GM10248 (cell line): ENCODE measurements at regions of chr6 and their contacts with region 1.

Region 1: DNA sequence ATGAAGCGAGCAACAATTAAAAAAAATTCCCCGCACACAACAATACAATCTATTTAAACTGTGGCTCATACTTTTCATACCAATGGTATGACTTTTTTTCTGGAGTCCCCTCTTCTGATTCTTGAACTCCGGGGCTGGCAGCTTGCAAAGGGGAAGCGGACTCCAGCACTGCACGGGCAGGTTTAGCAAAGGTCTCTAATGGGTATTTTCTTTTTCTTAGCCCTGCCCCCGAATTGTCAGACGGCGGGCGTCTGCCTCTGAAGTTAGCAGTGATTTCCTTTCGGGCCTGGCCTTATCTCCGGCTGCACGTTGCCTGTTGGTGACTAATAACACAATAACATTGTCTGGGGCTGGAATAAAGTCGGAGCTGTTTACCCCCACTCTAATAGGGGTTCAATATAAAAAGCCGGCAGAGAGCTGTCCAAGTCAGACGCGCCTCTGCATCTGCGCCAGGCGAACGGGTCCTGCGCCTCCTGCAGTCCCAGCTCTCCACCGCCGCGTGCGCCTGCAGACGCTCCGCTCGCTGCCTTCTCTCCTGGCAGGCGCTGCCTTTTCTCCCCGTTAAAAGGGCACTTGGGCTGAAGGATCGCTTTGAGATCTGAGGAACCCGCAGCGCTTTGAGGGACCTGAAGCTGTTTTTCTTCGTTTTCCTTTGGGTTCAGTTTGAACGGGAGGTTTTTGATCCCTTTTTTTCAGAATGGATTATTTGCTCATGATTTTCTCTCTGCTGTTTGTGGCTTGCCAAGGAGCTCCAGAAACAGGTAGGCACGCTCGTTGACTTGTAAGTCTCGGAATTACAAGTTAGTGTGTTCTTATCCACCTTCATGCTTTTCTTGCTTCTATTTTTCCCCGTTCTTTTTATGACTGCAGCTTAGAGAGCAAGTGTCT is at the start of gene EDN1:
- DNase-seq: peak; percentile 74
- CTCF ChIP-seq: peak; percentile 53

Region 2: DNA sequence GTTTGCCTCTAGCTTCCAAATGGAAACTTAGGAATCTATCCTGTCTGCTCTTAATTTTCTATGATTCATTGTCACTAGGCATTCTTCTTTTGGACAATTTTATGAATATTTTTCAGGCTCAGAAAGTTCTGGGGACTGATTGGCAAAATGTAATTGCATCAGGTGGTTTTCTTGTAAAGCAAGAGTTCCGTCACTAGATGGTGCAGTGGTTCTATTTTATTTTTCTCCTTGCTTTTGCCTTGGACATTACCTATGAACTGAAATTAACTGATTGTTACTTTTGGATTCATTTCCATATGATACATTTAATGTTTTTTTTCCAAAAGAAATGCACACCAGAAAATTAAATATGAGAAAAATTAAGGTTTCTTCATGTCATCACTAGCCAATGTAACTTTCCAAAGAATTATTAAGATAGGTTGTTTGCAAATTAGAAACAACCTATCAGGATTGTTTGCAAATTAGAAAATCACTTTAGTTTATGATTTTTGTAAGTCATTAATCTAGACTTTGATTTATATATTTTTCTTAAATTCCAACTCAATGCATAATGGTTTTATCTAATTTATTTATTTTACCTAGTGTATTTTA is 704.7 kb before region 1 on chr6:
- CTCF ChIA-PET with region 1: interaction called, 32 read pairs
- POLR2A ChIA-PET with region 1: no interaction called
- DNase-seq: peak; percentile 52
- CTCF ChIP-seq: peak; percentile 57

Region 3: GRCh38 chr6:11618533-11618932 is 671.6 kb before region 1 on chr6:
- CTCF ChIA-PET with region 1: interaction called, 10 read pairs
- POLR2A ChIA-PET with region 1: no interaction called
- DNase-seq: no peak
- CTCF ChIP-seq: peak; percentile 30

Region 4: DNA sequence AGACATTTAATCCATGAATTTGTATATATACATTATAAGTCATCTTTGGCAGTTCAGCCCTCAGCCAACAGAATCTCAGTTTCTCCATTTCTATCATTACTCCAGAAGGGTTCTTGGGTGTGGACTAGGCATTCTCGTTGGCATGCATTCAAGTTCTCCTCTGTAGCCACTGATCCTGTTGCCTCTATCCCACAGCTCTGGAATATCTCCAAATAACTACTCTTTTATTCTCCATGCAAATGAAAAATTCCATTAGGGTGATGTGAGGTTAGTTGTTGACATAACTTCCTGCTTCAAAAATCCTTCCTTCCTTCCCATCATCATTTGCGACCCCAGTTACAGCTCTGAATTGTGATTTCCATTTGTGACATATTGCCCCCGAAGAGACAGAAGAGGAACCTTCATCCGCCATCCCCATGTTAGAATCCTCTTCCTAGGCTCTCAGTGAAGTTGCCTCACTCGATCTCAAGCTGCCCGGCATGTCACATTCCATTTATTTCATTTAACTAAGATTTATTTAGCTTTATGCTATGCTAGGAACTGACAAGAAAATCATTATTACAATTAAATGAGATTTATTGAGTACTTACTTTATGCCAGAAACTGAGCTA is 93.7 kb before region 1 on chr6:
- CTCF ChIA-PET with region 1: no interaction called
- POLR2A ChIA-PET with region 1: no interaction called
- DNase-seq: no peak
- CTCF ChIP-seq: no peak

Region 5: DNA sequence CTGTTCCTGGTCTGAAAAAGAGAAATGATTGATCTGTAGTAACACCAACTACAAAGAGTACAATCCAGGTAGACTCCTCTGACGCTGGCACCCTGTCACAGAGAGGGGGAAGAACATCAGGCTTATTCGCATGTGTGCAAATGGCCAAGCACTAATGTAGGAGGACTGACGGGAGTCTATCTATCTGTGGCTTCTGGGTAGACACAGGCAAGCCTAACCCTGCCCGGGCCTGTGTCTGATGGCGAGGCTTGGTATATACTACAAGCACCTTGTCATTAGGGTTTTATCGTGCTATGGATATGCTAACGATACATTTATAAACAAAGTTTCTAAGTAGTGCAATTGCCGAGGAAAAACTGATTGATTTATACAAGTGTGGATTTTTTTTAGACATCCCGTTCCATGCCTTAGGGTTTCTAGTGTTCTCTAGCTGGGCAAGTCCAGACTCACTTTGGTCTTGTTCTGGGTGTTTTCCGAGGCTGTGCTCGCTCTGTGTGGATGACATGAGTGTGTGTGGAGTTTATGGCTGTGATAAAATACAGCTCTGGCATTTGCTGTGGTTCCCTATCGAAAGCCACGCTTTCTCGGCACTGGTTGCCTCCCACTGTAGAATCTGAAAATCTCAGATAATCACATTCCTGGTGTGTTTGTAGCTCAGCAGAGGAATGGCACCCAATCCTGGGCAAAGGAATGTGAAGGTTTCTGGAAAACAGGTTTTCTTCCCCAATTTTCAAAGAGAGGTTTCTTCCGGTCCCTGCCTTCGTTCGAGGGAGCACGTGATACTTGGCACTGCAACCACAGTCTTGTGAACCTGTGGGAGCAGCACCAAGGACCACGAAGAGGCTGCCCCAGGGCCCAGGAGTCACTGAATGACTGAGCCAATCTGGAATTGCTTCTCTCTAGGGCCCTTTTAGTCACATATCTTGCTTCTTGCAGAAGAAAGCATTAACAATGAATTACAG is 67.5 kb before region 1 on chr6:
- CTCF ChIA-PET with region 1: no interaction called
- POLR2A ChIA-PET with region 1: no interaction called
- DNase-seq: no peak
- CTCF ChIP-seq: no peak

Region 6: DNA sequence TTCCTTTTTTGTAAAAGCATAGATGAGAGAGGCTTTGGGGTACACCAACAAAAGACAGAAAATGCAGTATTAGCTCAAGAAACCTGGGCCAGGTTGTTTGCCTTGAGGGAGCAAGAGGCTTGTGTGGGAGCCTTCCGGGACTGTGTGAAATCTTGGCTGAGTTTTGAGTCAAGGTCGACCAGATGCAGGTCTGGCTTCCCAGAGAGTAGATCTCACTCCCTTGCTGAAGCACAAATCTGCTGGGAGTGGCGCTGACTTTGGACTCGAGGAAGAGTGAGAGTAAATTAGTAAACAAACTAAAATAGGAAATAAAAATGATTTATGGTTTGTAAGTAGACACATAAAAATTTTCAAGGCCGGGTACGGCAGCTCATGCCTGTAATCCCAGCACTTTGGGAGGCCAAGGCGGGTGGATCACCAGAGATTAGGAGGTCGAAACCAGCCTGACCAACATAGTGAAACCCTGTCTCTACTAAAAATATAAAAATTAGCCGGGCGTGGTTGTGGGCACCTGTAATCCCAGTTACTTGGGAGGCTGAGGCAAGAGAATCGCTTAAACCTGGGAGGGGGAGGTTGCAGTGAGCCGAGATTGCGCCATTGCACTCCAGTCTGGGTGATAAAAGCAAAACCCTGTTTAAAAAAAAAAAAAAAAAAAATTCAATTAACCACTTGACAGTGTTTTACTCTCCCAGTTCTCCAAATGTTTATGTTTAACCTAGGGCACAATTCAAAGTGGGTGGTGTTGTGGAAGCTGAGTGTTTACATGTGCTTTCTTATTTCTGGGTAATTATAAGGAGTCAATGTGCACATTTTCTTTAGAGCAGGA is 27.7 kb before region 1 on chr6:
- CTCF ChIA-PET with region 1: interaction called, 11 read pairs
- POLR2A ChIA-PET with region 1: no interaction called
- DNase-seq: no peak
- CTCF ChIP-seq: no peak

Region 7: GRCh38 chr6:12311106-12311505 is 20.9 kb after region 1 on chr6:
- CTCF ChIA-PET with region 1: interaction called, 19 read pairs
- POLR2A ChIA-PET with region 1: no interaction called
- DNase-seq: no peak
- CTCF ChIP-seq: no peak

Region 8: GRCh38 chr6:12483712-12484111 is 193.5 kb after region 1 on chr6:
- CTCF ChIA-PET with region 1: interaction called, 14 read pairs
- POLR2A ChIA-PET with region 1: no interaction called
- DNase-seq: peak; percentile 24
- CTCF ChIP-seq: no peak

Region 9: DNA sequence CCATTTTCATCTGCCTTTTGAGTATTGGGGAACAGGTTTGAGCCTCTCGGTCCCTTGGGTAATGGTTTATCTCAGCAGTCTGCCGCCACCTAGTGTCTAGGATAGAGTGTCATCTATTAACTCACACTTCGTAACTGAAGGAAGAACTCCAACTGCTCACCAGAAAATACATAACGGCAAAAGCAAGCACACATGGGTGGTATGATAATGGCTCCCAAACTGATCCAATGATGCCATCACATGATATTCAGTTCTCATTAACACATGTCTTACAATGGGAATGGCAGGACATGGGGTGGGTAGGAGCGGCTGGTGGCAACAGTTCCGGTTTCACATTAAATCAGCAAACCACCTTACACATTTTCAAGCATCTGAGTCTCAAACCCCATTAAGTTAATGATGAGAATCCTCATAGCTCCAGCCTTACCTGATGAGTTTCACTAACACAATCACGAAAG is 315.7 kb after region 1 on chr6:
- CTCF ChIA-PET with region 1: interaction called, 126 read pairs
- POLR2A ChIA-PET with region 1: no interaction called
- DNase-seq: no peak
- CTCF ChIP-seq: peak; percentile 56